Activated naive CD4-positive, alpha-beta T cell treated with anti-CD3 and anti-CD28 coated beads for 36 hours (primary cell): ENCODE measurements at regions of chr10 and their contacts with region 1.

Region 1: GRCh38 chr10:80472234-80473095 is 18.4 kb downstream of the TSPAN14 start:
- DNase-seq: peak; percentile 75
- H3K4me3 Mint-ChIP-seq: peak overlapping the region; percentile 36
- H3K27ac Mint-ChIP-seq: peak overlapping the region; percentile 98
- H3K4me1 Mint-ChIP-seq: peaks cover 87% of the 10 kb centered on the region
- H3K27me3 Mint-ChIP-seq: no peaks in the 10 kb centered on the region

Region 2: DNA sequence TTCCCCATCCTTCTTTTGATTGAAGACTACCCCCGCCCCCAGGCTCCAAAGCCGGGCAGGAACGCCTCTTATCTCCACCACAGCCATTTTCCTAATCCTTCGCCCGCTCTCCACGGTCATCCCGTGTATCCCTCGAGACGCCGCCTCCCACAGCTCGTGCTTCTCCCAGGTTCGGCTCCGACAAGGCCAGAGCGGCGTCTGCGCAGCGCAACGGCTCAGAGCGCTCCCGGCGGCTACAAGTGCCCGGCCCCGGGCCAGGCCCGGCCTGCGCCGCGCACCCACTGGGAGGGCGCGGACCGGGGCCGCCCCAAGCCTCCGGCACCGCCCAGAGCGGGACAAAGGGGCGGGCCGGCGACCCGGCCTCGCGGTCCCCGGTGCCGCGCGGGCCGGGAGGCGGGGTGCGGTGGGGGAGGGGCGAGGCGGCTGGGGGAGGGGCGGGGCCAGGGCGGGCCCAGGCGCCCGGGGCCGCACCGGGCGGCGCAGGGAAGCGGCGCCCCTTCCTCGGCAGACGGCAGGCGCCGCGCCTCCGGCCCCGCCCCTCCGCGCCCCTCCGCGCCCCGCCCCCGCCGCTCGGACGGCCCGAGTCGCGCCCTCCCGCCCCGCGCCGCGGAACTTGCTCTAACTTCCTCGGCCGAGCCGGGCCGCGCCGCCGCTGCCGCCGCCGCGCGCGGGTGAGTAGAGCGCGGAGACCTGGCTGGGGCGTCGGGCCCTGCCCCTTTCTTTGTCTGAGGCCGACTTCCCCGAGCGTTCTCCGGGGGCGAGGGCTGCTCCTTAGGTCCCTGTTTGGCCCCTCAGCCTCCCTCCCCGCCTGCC is 18.6 kb before region 1 on chr10 and contains the start of gene TSPAN14:
- CTCF ChIA-PET with region 1: interaction called, 74 read pairs
- intact Hi-C with region 1: loop called (anchors 1 kb)
- DNase-seq: peak; percentile 74
- H3K4me3 Mint-ChIP-seq: peak within 1 kb of the TSS; percentile 98
- H3K27ac Mint-ChIP-seq: peak within 1 kb of the TSS; percentile 93
- H3K4me1 Mint-ChIP-seq: peaks cover 44% of the 10 kb centered on the region
- H3K27me3 Mint-ChIP-seq: no peaks in the 10 kb centered on the region
- total RNA-seq, gene TSPAN14: 33.5 to 35.5 TPM

Region 3: GRCh38 chr10:80487791-80488538 is 15.5 kb after region 1 on chr10:
- CTCF ChIA-PET with region 1: interaction called, 8 read pairs
- intact Hi-C with region 1: loop called (anchors 1 kb)
- DNase-seq: peak; percentile 73
- H3K4me3 Mint-ChIP-seq: peak overlapping the region; percentile 32
- H3K27ac Mint-ChIP-seq: peak overlapping the region; percentile 86
- H3K4me1 Mint-ChIP-seq: peaks cover 98% of the 10 kb centered on the region
- H3K27me3 Mint-ChIP-seq: no peaks in the 10 kb centered on the region

Region 4: DNA sequence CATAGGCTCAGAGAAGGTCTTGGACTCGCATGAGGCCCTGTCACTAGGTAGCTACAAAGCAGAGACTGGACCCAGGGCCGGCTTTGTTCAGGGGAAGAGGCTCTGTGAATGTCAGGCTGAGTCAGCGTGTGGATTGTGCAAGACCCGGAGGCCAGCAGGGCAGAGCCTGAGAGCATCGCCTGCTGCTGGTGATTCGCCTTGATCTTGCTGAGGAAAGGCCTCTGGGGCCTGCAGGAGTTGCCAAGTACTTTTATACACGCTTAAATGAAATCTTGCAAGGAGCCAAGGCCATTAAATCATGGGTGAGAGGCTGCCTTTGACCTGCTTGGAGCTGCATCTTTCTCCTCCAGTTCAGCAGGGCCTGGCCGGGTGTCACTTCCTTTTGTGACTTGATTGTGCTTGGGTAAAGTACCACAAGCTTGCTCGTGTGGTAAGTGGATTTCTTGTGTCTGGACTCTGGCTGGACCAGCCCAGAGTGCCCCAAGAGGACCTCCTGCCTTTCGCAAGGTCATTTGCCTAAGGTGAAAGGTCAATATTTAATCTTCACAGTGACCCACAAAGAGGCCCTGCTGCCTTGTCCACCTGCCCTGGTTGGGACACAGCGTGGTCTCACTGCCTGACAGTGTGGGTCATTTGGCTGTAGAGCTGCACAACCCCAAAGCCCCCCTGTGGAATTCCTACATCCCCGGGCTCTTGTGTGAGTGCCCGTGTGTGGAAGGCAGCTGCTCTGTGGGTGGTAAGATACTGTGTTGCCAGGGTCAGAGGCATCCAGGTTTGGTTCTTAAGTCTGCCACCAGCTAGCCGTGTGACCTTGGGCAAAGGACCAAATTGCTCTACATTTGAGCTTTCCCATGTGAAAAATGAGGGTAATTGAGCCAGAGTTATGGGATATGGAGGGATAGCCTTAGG is 26.6 kb after region 1 on chr10:
- CTCF ChIA-PET with region 1: interaction called, 237 read pairs
- intact Hi-C with region 1: loop called (anchors 1 kb)
- DNase-seq: peak; percentile 86
- H3K4me3 Mint-ChIP-seq: peak overlapping the region; percentile 53
- H3K27ac Mint-ChIP-seq: peak overlapping the region; percentile 97
- H3K4me1 Mint-ChIP-seq: peaks cover 99% of the 10 kb centered on the region
- H3K27me3 Mint-ChIP-seq: no peaks in the 10 kb centered on the region